KBM-7 (cell line): ENCODE measurements at regions of chr20 and their contacts with region 1.

Region 1: GRCh38 chr20:38645980-38646858 is 44.6 kb downstream of the ARHGAP40 start:
- DNase-seq: peak; percentile 80

Region 2: GRCh38 chr20:38730989-38731737 is 84.9 kb after region 1 on chr20:
- in situ Hi-C with region 1: no loop called
- DNase-seq: peak; percentile 79

Region 3: GRCh38 chr20:39049684-39050554 is 403.7 kb after region 1 on chr20:
- in situ Hi-C with region 1: loop called (anchors 25 kb)
- DNase-seq: peak; percentile 86